WTC11 (cell line): ENCODE measurements at regions of chr11 and their contacts with region 1.

Region 1: DNA sequence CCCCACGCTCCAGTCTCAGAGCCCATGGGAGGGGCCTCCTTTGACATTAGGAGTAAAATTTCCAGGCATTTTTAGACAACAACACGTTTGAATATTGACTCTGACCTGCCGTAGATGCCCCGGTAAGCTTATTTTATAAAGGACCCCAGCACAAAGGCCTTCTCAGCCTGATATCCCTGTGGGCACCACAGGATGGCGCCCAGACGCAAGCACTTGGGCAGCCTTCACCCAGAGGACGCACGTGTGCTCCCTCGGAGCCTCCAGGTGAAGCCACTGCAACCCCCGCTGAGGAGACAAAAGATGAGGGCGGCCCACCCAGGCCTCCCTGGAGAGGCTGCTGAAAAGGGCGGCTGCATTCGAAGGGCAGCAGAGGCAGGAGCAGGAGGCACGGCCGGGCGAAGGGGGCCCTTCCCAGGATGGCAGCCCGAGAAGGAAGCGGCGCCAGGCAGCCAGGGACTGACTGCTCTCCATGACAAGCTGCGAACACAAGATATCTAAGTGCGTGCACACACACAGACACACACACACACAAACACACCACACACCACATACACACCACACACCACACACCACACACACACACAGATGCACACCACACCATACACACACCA is 15.2 kb upstream of the TH start:
- DNase-seq: peak; percentile 56
- ATAC-seq: peak; percentile 78
- H3K4me3 Mint-ChIP-seq: no peak overlapping the region
- H3K27ac Mint-ChIP-seq: no peak overlapping the region
- H3K4me1 Mint-ChIP-seq: no peaks in the 10 kb centered on the region
- H3K27me3 Mint-ChIP-seq: peaks cover 5% of the 10 kb centered on the region
- CTCF ChIP-seq: peak; percentile 41

Region 2: DNA sequence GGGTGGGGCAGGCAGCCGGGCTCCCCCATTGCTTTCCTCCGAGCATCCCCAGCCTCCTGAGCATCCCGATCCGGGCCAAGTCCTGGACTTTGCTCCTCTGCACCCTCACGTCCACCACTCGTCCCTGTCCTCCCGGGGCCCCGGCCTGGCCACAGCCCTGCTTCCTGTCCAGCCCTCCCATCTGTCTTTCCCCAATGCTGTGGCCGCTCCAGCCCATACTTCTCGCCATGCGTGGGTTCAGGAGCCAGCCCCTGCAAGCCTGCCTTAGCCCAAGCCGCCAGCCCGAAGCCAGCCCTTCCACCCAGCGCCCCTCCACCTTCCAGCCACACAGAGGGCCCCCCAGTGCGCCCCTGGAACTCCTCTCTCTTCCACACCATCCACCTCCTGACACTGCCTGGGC is 215.8 kb before region 1 on chr11:
- CTCF ChIA-PET with region 1: no interaction called
- POLR2A ChIA-PET with region 1: no interaction called
- DNase-seq: peak; percentile 6
- ATAC-seq: no peak
- H3K4me3 Mint-ChIP-seq: no peak overlapping the region
- H3K27ac Mint-ChIP-seq: no peak overlapping the region
- H3K4me1 Mint-ChIP-seq: no peaks in the 10 kb centered on the region
- H3K27me3 Mint-ChIP-seq: no peaks in the 10 kb centered on the region
- CTCF ChIP-seq: no peak

Region 3: GRCh38 chr11:2196970-2197770 is 10.4 kb after region 1 on chr11:
- CTCF ChIA-PET with region 1: interaction called, 12 read pairs
- POLR2A ChIA-PET with region 1: no interaction called
- DNase-seq: peak; percentile 87
- ATAC-seq: peak; percentile 87
- H3K4me3 Mint-ChIP-seq: no peak overlapping the region
- H3K27ac Mint-ChIP-seq: no peak overlapping the region
- H3K4me1 Mint-ChIP-seq: no peaks in the 10 kb centered on the region
- H3K27me3 Mint-ChIP-seq: peaks cover 13% of the 10 kb centered on the region
- CTCF ChIP-seq: peak; percentile 56; the same call in 1 of the 2 replicates

Region 4: GRCh38 chr11:2537896-2538724 is 351.3 kb after region 1 on chr11:
- CTCF ChIA-PET with region 1: no interaction called
- POLR2A ChIA-PET with region 1: no interaction called
- DNase-seq: no peak
- ATAC-seq: no peak
- H3K4me3 Mint-ChIP-seq: no peak overlapping the region
- H3K27ac Mint-ChIP-seq: no peak overlapping the region
- H3K4me1 Mint-ChIP-seq: peaks cover 6% of the 10 kb centered on the region
- H3K27me3 Mint-ChIP-seq: peaks cover 78% of the 10 kb centered on the region
- CTCF ChIP-seq: no peak